Ascending aorta (tissue), 2 donors: ENCODE measurements at regions of chr6 and their contacts with region 1.

Region 1: GRCh38 chr6:119110601-119111548 is 32.4 kb upstream of the FAM184A start:
- DNase-seq: no peak
- H3K4me3 ChIP-seq: no peak overlapping the region
- H3K27ac ChIP-seq: no peak overlapping the region
- H3K4me1 ChIP-seq: no peaks in the 10 kb centered on the region
- H3K27me3 ChIP-seq: no peaks in the 10 kb centered on the region
- CTCF ChIP-seq: peak; percentile 47 to 70 (median 48)

Region 2: DNA sequence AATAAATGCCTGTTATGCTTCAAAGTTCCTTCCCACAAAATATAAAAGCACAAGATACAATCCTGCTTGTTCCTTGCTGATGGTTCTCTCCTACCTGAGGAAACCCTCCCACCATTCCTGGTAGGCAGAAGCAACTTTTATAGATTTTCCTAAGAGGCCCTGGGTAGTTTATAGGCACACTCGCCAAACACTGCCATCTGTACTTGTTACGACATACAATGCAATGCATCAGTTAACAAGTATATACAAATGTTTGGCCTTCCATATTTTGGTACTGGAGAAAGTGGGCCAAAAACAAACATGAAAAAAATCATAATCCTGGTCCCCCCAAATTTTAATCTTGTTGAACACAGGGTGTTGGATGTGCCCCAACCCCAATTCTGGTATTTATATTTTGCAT is 192.5 kb before region 1 on chr6:
- intact Hi-C with region 1: no loop called
- DNase-seq: no peak
- H3K4me3 ChIP-seq: no peak overlapping the region
- H3K27ac ChIP-seq: no peak overlapping the region
- H3K4me1 ChIP-seq: no peaks in the 10 kb centered on the region
- H3K27me3 ChIP-seq: no peaks in the 10 kb centered on the region
- CTCF ChIP-seq: no peak

Region 3: GRCh38 chr6:118968416-118968815 is 142.5 kb before region 1 on chr6:
- intact Hi-C with region 1: loop called (anchors 1 kb)
- DNase-seq: no peak
- H3K4me3 ChIP-seq: no peak overlapping the region
- H3K27ac ChIP-seq: no peak overlapping the region
- H3K4me1 ChIP-seq: no peaks in the 10 kb centered on the region
- H3K27me3 ChIP-seq: no peaks in the 10 kb centered on the region
- CTCF ChIP-seq: peak in 2 of 3 experiments; percentile 10 to 49

Region 4: DNA sequence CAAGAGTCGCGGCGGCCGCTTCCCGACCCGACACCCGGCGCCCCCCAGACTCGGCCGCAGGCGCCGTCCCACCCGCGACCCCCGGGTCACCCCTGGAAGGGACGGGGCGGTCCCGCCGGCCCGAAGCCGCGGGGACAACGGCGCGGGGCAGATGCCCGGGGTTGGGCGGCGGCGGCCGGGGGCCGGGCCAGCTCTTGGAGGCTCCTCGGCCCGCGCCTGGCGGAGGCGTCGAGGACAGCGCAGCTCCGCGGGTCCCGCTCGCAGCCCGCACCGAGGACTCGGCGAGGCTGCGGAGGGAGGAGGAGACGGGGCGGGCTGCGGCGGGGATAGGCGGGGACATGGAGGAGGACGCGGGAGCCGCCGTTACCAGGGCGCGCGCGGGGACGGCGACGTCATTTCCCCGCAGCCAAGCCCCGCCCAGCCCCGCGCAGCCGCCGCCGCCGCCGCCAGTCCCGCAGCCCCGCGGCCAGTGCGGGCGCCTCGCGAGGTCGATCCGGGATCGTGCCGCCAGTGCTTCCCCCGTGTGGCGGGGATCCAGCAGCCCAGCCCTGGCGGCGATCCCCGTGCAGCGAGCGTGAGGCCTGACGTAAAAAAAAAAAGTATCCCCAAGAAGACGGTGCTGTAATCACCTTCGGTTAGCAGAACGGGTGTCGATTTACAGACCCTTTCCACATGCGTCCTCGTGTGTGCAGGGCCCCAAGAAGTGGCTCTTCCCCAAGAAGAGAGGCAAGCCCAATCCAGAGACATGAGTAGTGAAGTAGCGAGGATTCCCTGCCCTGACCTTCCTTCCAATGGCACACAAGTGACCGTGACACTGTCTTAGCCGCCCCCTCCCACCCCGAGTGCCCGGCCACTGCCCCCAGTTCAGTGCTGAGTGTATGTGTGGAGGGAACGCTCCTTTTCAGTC is 32.2 kb before region 1 on chr6 and contains the start of gene FAM184A:
- intact Hi-C with region 1: loop called (anchors 2 kb)
- DNase-seq: peak in 1 of 2 donors; percentile 80
- H3K4me3 ChIP-seq: peak within 1 kb of the TSS; percentile 82 to 90
- H3K27ac ChIP-seq: peak within 1 kb of the TSS; percentile 59 to 66
- H3K4me1 ChIP-seq: no peaks in the 10 kb centered on the region
- H3K27me3 ChIP-seq: no peaks in the 10 kb centered on the region
- CTCF ChIP-seq: peak in 2 of 3 experiments; percentile 8 to 14
- total RNA-seq, gene FAM184A: 3.1 TPM